ENCODE measurements at regions of chr5 and their contacts with region 1.

Region 1: GRCh38 chr5:91499943-91500531 is 116.9 kb upstream of the ARRDC3 start:
- ATAC-seq: peak; percentile 56 to 83 (median 58)
- H3K4me3 ChIP-seq: no peak overlapping the region
- H3K27ac ChIP-seq: no peak overlapping the region
- H3K4me1 ChIP-seq: peaks cover 0 to 7% of the 10 kb centered on the region in 2 donors

Region 2: DNA sequence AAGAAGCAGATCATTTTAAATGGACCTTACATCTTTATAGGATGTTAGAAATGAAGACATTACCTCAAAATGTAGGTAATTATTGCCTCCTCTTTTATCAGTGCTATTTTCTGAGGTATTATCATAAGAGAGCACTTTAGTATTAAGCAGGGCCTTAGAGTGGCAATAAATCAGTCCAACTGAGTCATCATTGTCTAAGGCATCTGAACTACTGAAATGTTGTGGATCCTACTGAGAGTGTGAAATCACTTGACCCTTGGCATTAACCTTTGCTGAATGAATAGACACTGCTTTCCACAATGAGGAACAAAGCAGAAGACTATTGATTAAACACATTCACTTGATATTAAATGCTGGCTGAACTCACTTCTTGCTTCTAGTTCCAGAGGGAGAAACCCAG is 107.6 kb after region 1 on chr5:
- in situ Hi-C with region 1: loop called in 1 of 9 experiments (anchors 25 kb)
- ATAC-seq: peak in 5 of 8 experiments; percentile 97 to 99 (median 98)
- H3K4me3 ChIP-seq: no peak overlapping the region
- H3K27ac ChIP-seq: no peak overlapping the region
- H3K4me1 ChIP-seq: peaks cover 9 to 42% of the 10 kb centered on the region in 2 donors

Region 3: DNA sequence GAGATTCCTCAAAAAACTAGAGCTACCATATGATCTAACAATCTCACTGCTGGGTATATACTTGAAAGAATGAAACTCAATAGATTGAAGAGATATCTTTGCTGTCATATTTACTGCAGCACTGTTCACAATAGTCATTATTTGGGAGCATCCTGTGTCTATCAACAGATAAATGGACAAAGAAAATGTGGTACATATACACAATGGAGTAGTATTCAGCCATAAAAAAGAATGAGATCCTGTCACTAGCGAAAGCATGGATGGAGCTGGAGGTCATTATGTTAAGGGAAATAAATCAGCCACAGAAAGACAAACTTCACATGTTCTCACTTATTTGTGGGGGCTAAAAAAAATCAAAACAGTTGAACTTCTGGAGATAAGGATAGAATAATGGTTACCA is 388.8 kb after region 1 on chr5:
- in situ Hi-C with region 1: no loop called
- ATAC-seq: no peak
- H3K4me3 ChIP-seq: no peak overlapping the region
- H3K27ac ChIP-seq: no peak overlapping the region
- H3K4me1 ChIP-seq: peaks cover 0 to 8% of the 10 kb centered on the region in 2 donors